ENCODE measurements at regions of chr22 and their contacts with region 1.

Region 1: GRCh38 chr22:39502109-39502788 is at the start of gene MIEF1:
- DNase-seq: peak; percentile 94
- H3K4me3 Mint-ChIP-seq: peak within 1 kb of the TSS; percentile 91
- H3K27ac Mint-ChIP-seq: peak within 1 kb of the TSS; percentile 92
- H3K4me1 Mint-ChIP-seq: peaks cover 41% of the 10 kb centered on the region
- H3K27me3 Mint-ChIP-seq: peaks cover 10% of the 10 kb centered on the region
- total RNA-seq, gene MIEF1: 32.4 to 32.6 TPM

Region 2: DNA sequence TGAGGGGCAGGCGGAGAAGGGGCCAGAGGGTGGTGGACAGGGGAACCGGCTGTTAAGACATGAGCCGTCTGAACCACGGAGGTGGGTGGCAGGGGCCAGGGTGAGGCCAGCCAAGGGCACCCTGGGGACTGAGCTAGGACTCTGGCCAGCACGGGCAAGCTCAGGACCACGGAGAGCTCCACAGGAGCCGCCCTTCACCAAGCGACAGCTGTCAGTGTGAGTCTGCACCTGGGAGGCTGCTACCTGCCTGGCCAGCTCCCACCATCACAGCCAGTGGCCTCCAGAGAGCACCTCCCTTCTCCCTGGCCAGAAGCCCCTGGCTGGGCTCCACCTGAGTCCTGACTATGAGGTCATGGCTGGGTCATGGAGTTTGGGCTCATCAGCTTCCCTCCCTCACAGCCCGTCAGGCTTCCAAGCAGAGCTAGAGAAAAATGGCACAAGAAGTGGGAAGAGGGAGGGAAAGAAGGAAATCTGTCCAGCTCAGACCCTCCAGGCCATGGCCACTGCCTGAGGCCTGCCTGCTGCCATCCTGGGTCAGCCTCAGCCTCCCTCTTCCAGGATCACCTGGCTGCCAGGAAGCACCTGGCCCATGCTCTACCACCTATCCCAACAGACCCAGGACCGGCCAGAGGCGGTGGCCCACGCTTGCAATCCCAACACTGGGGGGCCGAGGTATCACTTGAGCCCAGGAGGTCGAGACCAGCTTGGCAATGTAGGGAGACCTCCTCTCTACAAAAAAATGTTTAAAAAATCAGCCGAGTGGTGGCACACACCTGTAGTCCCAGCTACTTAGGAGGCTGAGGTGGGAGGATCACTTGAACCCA is 23.6 kb before region 1 on chr22:
- CTCF ChIA-PET with region 1: no interaction called
- POLR2A ChIA-PET with region 1: no interaction called
- DNase-seq: peak; percentile 44
- H3K4me3 Mint-ChIP-seq: no peak overlapping the region
- H3K27ac Mint-ChIP-seq: no peak overlapping the region
- H3K4me1 Mint-ChIP-seq: no peaks in the 10 kb centered on the region
- H3K27me3 Mint-ChIP-seq: no peaks in the 10 kb centered on the region

Region 3: DNA sequence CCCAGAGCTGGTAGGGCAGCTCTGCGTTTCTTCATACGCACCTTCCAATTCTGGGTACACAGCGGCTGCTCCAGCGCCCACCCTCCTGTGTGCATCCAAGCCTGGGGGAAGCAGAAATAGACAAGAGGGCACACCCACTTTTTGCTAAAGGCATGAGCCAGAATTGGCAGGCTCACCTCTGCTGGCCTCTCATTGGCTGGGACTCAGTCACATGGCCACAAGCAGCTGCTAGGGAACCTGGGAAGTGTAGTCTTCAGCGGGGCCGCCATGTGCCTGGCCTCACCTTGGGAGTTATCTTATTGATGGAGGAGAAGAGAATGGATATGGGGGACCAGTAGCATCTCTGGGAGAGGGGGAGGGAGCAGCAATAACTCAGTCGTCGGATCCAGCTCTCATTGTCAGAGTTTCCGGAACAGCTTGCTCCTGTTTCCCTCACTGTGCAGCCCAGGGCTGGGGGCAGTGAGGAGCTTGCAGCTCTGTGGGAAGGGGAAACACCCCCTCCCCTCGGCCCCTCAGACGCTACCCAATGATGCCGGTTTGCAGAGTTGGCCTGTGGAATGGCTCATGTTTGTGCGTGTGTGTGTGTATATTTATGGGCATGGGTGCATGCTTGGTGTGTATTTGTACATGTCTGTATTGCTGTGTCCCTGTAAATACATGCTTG is 12.0 kb before region 1 on chr22:
- CTCF ChIA-PET with region 1: interaction called, 10 read pairs
- POLR2A ChIA-PET with region 1: interaction called, 15 read pairs
- DNase-seq: peak; percentile 82
- H3K4me3 Mint-ChIP-seq: no peak overlapping the region
- H3K27ac Mint-ChIP-seq: no peak overlapping the region
- H3K4me1 Mint-ChIP-seq: peaks cover 14% of the 10 kb centered on the region
- H3K27me3 Mint-ChIP-seq: peaks cover 2% of the 10 kb centered on the region

Measured in activated CD4-positive, alpha-beta memory T cell treated with anti-CD3 and anti-CD28 coated beads, Interleukin-2, amount 10 ng/mL, durations not matched to agents 7 days and 5 days (primary cell).